Activated naive CD4-positive, alpha-beta T cell treated with anti-CD3 and anti-CD28 coated beads for 36 hours (primary cell): ENCODE measurements at regions of chr17 and their contacts with region 1.

Region 1: GRCh38 chr17:4948931-4949320 is 596 bp upstream of the PFN1 start:
- DNase-seq: peak; percentile 78
- H3K4me3 Mint-ChIP-seq: peak overlapping the region; percentile 97
- H3K27ac Mint-ChIP-seq: peak overlapping the region; percentile 99
- H3K4me1 Mint-ChIP-seq: peaks cover 35% of the 10 kb centered on the region
- H3K27me3 Mint-ChIP-seq: no peaks in the 10 kb centered on the region

Region 2: DNA sequence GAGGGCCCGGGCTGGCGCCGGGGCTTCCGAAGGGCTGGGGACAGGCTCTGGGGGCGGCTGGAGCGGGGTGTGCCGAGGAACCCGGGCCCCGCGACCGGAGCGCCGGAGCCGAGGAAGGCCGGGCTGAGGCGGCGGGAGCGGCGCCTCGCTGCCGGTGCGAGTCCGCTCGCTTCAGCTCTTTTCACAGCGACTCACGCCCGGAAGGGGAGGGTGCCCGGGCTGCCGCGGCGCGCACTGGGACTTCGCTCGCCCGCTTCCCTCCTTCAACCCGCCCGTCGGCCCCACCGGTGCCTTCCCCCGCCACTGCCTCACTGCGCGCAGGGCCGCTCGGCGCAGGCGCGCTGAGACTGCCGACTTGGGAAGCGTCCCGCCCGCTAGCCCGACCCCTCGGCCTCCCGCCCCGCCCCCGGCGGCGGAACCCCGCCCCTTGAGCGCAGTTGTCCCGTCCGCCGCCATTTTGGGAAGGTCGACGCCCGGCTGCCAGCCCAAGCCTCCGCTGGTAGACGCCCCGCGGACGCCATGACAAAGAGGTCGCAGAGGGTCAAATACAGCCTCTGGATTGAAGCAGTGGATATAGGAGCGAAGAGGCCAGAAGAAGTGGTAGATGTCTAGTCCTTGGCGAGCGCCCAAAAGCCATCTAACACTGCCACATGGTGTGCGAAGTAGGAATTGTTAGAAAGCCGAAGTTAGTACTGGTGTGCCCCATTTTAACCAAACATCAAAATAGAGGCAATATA is 582.4 kb before region 1 on chr17 and contains the start of gene UBE2G1:
- CTCF ChIA-PET with region 1: no interaction called
- intact Hi-C with region 1: loop called (anchors 2 kb)
- DNase-seq: peak; percentile 99
- H3K4me3 Mint-ChIP-seq: peak within 1 kb of the TSS; percentile 71
- H3K27ac Mint-ChIP-seq: peak within 1 kb of the TSS; percentile 81
- H3K4me1 Mint-ChIP-seq: peaks cover 31% of the 10 kb centered on the region
- H3K27me3 Mint-ChIP-seq: no peaks in the 10 kb centered on the region
- total RNA-seq, gene UBE2G1: 33.3 to 36.1 TPM

Region 3: DNA sequence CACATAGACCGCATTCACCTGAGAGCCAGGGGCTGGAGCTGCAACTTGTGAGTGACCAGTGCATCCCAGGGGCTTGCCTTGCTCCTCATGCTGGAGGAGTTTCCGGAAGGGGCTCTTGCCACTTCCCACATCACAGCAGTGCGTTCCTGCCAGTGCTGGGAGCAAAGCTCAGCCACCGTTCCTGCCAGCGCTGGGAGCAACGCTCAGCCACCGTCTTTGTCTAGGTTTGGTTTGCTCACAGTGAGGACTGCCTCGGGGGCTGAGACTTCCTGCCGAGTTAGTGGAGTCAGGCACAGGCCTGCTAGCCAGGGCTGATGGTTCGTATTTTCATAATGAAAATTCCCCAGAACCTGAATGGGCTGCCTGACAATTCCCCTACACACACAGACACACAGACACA is 40.6 kb before region 1 on chr17:
- CTCF ChIA-PET with region 1: interaction called, 4 read pairs
- intact Hi-C with region 1: loop called (anchors 1 kb)
- DNase-seq: peak; percentile 34
- H3K4me3 Mint-ChIP-seq: no peak overlapping the region
- H3K27ac Mint-ChIP-seq: no peak overlapping the region
- H3K4me1 Mint-ChIP-seq: peaks cover 4% of the 10 kb centered on the region
- H3K27me3 Mint-ChIP-seq: no peaks in the 10 kb centered on the region

Region 4: DNA sequence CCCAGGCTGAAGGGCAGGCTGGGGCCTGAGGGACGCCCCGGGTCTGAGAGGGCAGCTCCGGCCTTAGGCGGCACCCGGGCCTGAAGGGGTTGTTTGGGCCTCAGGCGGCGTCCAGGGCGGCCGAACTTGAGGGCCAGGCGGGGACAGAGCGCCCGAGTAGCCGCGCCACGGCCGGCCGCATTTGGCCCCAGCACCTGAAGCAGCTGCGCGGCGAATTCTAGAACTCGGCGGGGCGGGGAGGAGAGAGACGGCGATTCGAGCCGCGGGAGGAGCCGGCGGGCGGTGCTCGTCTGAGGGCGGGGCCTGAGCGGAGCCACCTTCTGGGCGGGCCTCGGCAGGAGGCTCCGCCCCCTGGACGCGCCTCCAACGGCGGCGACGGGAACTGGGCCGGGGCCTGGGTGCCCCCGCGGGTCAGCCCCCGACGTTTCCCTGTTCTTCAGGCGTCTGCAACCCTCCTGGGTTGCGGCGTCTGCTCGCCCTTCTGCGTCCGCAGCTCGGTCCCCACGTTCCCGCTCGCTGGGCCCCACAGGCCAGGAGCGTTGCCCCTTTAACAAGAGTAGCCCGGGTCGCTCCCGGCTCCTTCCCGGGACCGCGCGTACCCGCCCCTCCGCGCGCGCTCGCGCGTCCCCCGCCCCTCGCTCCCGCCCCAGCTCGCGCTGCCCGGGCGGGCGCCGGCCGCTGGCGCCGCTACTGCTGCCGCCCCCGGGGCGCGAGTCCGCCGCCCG is 48.5 kb after region 1 on chr17 and contains the starts of genes INCA1 and KIF1C:
- CTCF ChIA-PET with region 1: no interaction called
- intact Hi-C with region 1: loop called (anchors 2 kb)
- DNase-seq: peak; percentile 93
- H3K4me3 Mint-ChIP-seq: peak within 1 kb of the TSS; percentile 83
- H3K27ac Mint-ChIP-seq: peak within 1 kb of the TSS; percentile 53
- H3K4me1 Mint-ChIP-seq: peaks cover 18% of the 10 kb centered on the region
- H3K27me3 Mint-ChIP-seq: no peaks in the 10 kb centered on the region
- total RNA-seq, gene INCA1: 0.21 to 0.54 TPM
- total RNA-seq, gene KIF1C: 30.5 to 31.1 TPM

Region 5: DNA sequence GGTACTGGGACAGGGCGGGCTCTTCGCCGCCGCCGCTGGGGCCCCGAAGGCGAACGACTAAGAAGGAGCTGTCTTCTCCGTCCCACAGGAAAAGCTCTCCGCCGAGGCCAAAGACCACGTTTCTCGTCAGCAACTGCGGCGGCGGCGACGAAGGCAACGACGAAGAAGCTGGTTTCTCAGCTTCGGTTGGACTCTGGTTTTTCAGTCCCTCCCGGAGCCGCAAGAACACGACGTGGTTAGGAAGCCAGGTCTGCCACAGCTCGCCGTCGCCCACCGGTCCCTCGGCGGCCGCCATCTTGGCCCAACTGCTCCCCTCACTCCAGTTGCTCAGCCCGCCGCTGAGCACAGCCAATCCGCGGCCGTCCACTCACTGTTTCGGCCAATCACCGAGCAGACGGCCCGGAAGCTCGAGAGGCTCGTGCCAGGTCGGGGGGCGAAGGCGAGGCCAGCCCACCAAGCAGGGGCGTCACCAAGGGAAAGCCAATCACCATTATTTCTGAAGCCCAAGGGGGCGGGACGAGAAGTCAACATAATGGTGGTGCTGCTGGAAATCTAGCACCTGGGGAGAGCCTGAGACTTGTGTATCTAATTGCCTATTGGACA is 470.5 kb after region 1 on chr17 and contains the start of gene NUP88:
- CTCF ChIA-PET with region 1: no interaction called
- intact Hi-C with region 1: loop called (anchors 2 kb)
- DNase-seq: peak; percentile 97
- H3K4me3 Mint-ChIP-seq: peak within 1 kb of the TSS; percentile 100
- H3K27ac Mint-ChIP-seq: peak within 1 kb of the TSS; percentile 100
- H3K4me1 Mint-ChIP-seq: peaks cover 50% of the 10 kb centered on the region
- H3K27me3 Mint-ChIP-seq: no peaks in the 10 kb centered on the region
- total RNA-seq, gene NUP88: 115 to 131 TPM